ENCODE measurements at regions of chr5 and their contacts with region 1.

Region 1: GRCh38 chr5:79059674-79060073 is 9.8 kb downstream of the DMGDH start:
- DNase-seq: no peak
- ATAC-seq: no peak
- H3K4me3 ChIP-seq: no peak overlapping the region
- H3K27ac ChIP-seq: no peak overlapping the region
- H3K4me1 ChIP-seq: no peaks in the 10 kb centered on the region
- H3K27me3 ChIP-seq: no peaks in the 10 kb centered on the region
- CTCF ChIP-seq: no peak
- POLR2A ChIP-seq: no peak
- RAD21 ChIP-seq: no peak

Region 2: GRCh38 chr5:78544561-78545201 is 515.0 kb before region 1 on chr5:
- CTCF ChIA-PET with region 1: no interaction called
- POLR2A ChIA-PET with region 1: no interaction called
- RAD21 ChIA-PET with region 1: no interaction called
- intact Hi-C with region 1: no loop called
- DNase-seq: no peak
- ATAC-seq: no peak
- H3K4me3 ChIP-seq: no peak overlapping the region
- H3K27ac ChIP-seq: no peak overlapping the region
- H3K4me1 ChIP-seq: peaks cover 0 to 8% of the 10 kb centered on the region in 2 experiments; a peak in 1 of 4 replicates
- H3K27me3 ChIP-seq: no peaks in the 10 kb centered on the region
- CTCF ChIP-seq: no peak
- POLR2A ChIP-seq: no peak
- RAD21 ChIP-seq: no peak

Region 3: GRCh38 chr5:79014631-79015030 is 45.0 kb before region 1 on chr5:
- CTCF ChIA-PET with region 1: no interaction called
- POLR2A ChIA-PET with region 1: no interaction called
- RAD21 ChIA-PET with region 1: no interaction called
- intact Hi-C with region 1: no loop called
- DNase-seq: no peak
- ATAC-seq: no peak
- H3K4me3 ChIP-seq: no peak overlapping the region
- H3K27ac ChIP-seq: no peak overlapping the region
- H3K4me1 ChIP-seq: no peaks in the 10 kb centered on the region
- H3K27me3 ChIP-seq: no peaks in the 10 kb centered on the region
- CTCF ChIP-seq: no peak
- POLR2A ChIP-seq: no peak
- RAD21 ChIP-seq: no peak

Region 4: GRCh38 chr5:79077680-79078365 is 18.1 kb after region 1 on chr5:
- CTCF ChIA-PET with region 1: no interaction called
- POLR2A ChIA-PET with region 1: no interaction called
- RAD21 ChIA-PET with region 1: no interaction called
- intact Hi-C with region 1: loop called (anchors 2 kb)
- DNase-seq: no peak
- ATAC-seq: no peak
- H3K4me3 ChIP-seq: no peak overlapping the region
- H3K27ac ChIP-seq: no peak overlapping the region
- H3K4me1 ChIP-seq: peaks cover 0 to 8% of the 10 kb centered on the region in 2 experiments; a peak in 2 of 4 replicates
- H3K27me3 ChIP-seq: no peaks in the 10 kb centered on the region
- CTCF ChIP-seq: no peak
- POLR2A ChIP-seq: no peak
- RAD21 ChIP-seq: no peak